ENCODE measurements at regions of chr7 and their contacts with region 1.

Region 1: DNA sequence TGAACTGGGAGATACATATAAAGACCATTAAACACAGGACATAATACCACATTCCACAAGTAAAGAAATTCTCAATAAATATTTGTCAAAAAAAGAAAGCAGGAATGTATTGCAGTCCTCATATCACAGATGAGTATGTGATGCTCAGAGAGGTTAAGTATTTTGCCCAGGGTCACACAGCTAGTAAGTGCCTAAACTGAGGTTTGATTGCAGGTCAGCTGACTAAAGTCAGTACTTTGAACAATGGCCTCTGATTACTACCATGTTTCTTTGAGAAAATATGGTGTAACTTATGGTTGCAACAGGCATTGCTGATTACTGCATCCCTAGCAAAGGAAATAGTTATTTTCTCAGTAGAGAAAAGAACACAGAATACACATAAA is 267.1 kb downstream of the ELMO1 start:
- DNase-seq: no peak
- H3K4me3 Mint-ChIP-seq: no peak overlapping the region
- H3K27ac Mint-ChIP-seq: no peak overlapping the region
- H3K4me1 Mint-ChIP-seq: peaks cover 16% of the 10 kb centered on the region
- H3K27me3 Mint-ChIP-seq: no peaks in the 10 kb centered on the region

Region 2: DNA sequence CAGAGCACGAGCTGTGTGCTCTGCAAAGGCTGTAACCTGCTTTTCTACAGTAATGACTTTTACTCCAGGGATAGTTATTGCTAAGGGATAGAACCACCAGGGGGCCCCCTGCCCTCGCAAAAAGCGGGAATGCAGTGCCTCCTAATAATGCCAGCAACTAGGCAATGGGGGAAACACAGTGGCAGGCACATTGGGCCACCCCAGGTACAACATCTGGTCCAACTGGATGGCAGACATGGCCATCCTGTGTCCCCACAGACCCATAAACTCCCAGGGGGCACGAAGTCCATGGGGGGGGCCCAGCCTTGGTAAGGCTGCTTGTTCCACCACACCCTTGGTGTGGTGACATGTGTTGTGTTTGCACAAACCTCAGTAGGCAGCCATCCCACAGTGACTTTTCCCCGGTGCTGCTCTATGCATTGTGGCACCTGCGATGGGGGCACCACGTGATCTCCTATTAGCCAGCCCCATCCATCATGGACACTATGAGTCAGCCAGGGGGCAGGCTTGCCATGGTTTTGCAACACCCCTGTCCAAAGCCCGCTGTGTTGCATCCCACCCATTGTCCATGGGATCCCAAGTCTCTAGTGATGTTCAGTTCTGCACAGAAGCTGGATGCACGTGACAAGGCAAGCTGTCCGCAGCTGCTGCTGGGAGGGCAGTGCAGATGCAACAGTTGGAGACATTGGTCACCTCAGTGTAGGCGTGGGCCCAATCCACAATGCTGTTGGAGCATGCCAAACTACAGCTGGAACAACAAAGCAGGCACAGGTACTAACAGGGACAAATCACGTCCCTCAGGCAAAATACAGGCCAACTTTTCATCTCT is 707.9 kb before region 1 on chr7:
- CTCF ChIA-PET with region 1: interaction called, 17 read pairs
- POLR2A ChIA-PET with region 1: interaction called, 3 read pairs
- DNase-seq: peak; percentile 48
- H3K4me3 Mint-ChIP-seq: no peak overlapping the region
- H3K27ac Mint-ChIP-seq: no peak overlapping the region
- H3K4me1 Mint-ChIP-seq: peaks cover 24% of the 10 kb centered on the region
- H3K27me3 Mint-ChIP-seq: no peaks in the 10 kb centered on the region

Region 3: DNA sequence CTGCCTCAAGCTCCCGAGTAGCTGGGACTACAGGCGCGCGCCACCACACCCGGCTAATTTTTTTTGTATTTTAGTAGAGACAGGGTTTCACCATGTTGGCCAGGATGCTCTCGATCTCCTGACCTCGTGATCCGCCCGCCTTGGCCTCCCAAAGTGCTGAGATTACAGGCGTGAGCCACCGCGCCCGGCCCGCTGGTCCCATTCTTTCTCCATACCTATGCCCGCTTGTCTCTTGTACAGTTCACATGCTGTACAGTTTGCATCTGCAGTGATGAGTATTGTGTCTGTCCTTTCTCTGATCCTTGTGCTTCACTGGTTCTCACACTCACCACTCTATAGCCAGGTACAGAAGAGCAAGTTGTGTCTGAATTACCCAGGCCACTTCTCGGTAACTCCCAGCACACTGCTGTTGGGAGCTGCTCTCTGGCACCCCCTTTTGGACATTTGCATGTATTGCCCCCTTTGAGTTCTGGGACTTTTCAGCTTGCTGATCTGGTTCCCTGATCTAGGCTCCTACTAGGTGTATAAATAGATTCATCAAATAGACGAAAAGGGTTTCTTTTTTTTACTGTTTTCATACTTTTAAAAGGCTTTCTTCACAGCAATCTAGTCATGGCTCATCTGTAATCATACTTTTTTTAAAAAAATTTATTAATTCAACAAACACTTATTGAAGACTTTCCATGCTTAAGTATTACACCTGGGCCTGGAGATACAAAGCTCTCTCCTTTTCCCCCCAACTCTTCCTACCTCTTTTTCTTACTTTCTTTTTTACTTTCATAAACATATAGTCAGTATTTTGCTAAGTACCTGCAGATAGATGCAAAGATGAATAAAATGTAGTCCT is 510.7 kb before region 1 on chr7:
- CTCF ChIA-PET with region 1: interaction called, 26 read pairs
- POLR2A ChIA-PET with region 1: no interaction called
- DNase-seq: peak; percentile 75
- H3K4me3 Mint-ChIP-seq: no peak overlapping the region
- H3K27ac Mint-ChIP-seq: no peak overlapping the region
- H3K4me1 Mint-ChIP-seq: peaks cover 35% of the 10 kb centered on the region
- H3K27me3 Mint-ChIP-seq: no peaks in the 10 kb centered on the region

Region 4: DNA sequence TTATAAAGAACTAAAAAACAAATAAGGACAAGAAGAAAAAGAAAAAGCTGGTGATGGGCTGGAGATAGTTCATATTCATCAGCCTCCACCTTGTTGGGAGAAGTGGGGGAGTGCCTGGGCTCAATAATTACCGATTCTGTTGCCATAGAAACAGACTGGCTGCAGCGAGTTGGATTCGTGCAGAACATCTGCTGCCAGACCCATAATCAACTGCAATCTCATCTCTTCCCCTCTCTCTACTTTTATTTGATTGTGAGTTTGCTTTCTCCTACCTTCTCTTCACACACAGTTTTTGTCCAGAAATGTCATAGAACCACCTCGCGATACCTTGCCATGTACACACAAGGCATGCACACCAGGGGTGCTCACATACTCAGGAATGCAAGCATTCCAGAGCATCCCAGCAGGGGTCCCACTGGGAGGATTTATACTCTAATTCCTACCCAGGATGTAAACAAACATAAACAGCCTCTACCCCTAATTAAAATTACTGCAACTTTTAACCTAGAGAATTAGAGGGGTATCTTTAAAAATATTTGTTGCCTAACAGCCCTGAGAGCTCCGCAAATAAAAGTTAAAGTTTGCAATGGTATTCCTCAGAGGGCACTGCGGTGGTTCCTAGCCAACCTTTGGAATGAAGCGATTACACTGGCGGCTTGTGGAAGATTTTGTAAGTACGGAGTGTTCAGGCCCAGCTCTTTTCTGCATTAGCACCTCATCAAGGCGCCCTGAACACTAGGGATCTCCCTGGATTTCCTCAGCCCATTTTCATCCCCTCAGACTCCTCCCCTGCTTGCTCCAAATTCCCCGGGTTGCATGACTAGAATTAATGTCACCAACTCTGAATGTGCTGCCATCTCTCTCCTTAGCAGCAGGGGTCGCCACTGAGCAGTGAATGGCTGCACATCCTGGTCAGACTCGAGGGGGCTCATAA is 194.8 kb before region 1 on chr7:
- CTCF ChIA-PET with region 1: interaction called, 13 read pairs
- POLR2A ChIA-PET with region 1: no interaction called
- DNase-seq: peak; percentile 63
- H3K4me3 Mint-ChIP-seq: no peak overlapping the region
- H3K27ac Mint-ChIP-seq: no peak overlapping the region
- H3K4me1 Mint-ChIP-seq: peaks cover 8% of the 10 kb centered on the region
- H3K27me3 Mint-ChIP-seq: no peaks in the 10 kb centered on the region